ENCODE measurements at regions of chr2 and their contacts with region 1.

Region 1: DNA sequence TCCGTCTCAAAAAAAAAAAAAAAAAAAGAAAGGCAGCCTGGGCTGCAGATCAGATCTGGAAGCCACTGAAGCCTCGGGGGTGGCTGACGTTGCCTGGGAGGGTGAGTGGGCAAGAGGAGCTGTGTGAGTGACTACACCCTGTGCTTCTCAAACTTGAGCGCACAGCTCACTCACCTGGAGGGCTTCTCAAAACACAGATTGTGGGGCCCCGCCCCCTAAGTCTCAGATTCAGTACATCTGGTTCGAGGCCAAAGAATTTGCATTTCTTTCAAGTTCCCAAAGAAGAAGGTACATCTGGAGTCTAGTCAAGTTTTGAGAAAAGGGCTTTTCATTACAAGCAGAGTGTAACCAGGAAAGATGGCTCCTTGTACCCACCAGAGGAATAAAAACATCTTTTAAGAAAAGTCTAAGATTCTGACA is 97.7 kb upstream of the CAB39 start:
- DNase-seq: peak; percentile 26
- H3K4me3 Mint-ChIP-seq: peak overlapping the region; percentile 26
- H3K27ac Mint-ChIP-seq: peak overlapping the region; percentile 55
- H3K4me1 Mint-ChIP-seq: peaks cover 54% of the 10 kb centered on the region
- H3K27me3 Mint-ChIP-seq: no peaks in the 10 kb centered on the region

Region 2: GRCh38 chr2:230007931-230008707 is 606.8 kb before region 1 on chr2:
- intact Hi-C with region 1: loop called (anchors 1 kb)
- DNase-seq: peak; percentile 66
- H3K4me3 Mint-ChIP-seq: no peak overlapping the region
- H3K27ac Mint-ChIP-seq: no peak overlapping the region
- H3K4me1 Mint-ChIP-seq: peaks cover 11% of the 10 kb centered on the region
- H3K27me3 Mint-ChIP-seq: no peaks in the 10 kb centered on the region

Region 3: GRCh38 chr2:230225486-230225885 is 389.4 kb before region 1 on chr2 and contains the start of gene SP140:
- intact Hi-C with region 1: loop called (anchors 2 kb)
- DNase-seq: peak; percentile 80
- H3K4me3 Mint-ChIP-seq: peak within 1 kb of the TSS; percentile 91
- H3K27ac Mint-ChIP-seq: peak within 1 kb of the TSS; percentile 98
- H3K4me1 Mint-ChIP-seq: peaks cover 63% of the 10 kb centered on the region
- H3K27me3 Mint-ChIP-seq: no peaks in the 10 kb centered on the region
- total RNA-seq, gene SP140: 235 and 243 TPM in 2 replicates

Region 4: GRCh38 chr2:230411570-230412370 is 203.2 kb before region 1 on chr2:
- intact Hi-C with region 1: loop called (anchors 2 kb)
- DNase-seq: peak; percentile 76
- H3K4me3 Mint-ChIP-seq: peak overlapping the region; percentile 93
- H3K27ac Mint-ChIP-seq: peak overlapping the region; percentile 99
- H3K4me1 Mint-ChIP-seq: peaks cover 79% of the 10 kb centered on the region
- H3K27me3 Mint-ChIP-seq: no peaks in the 10 kb centered on the region

Region 5: DNA sequence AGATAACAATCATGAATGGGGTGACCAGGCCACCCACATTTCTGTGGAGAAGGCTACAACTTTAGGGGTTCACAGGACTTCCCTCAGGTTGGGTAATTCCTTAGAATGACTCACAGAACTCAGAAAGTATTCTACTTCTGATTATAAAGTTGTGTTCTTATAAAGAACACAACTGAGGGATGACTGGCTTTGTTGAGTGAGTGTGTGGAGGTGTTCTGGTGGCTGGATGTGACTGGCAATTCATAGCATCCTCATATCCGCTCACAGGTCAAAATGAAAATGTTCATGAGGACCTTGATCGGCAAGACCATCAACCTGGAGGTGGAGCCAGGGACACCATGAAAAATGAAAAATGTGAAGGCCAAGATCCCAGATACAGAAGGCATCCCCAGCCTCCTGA is 45.6 kb before region 1 on chr2:
- intact Hi-C with region 1: no loop called
- DNase-seq: no peak
- H3K4me3 Mint-ChIP-seq: no peak overlapping the region
- H3K27ac Mint-ChIP-seq: no peak overlapping the region
- H3K4me1 Mint-ChIP-seq: peaks cover 25% of the 10 kb centered on the region
- H3K27me3 Mint-ChIP-seq: no peaks in the 10 kb centered on the region

Region 6: DNA sequence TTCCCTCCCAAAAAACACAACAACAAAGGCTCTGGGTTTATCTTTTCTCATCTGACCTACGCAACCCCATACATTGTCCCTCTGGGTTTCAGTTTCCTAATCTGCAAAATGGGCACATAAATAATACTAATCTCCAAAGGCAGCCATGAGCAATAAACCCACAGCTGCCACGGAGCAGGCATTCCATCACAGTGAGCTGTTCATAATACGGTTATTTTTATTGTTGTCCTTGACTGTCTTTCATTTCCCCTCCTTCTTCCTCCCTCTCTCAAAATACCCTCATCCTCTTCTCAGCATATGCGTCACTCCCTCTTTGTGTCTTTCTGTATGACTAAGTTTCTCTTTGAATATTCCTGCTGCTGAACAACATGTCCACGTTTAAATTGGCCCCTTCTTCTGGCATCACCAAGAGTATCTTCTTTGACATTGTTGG is 32.1 kb before region 1 on chr2:
- intact Hi-C with region 1: loop called (anchors 1 kb)
- DNase-seq: no peak
- H3K4me3 Mint-ChIP-seq: peak overlapping the region; percentile 24
- H3K27ac Mint-ChIP-seq: peak overlapping the region; percentile 62
- H3K4me1 Mint-ChIP-seq: peaks cover 27% of the 10 kb centered on the region
- H3K27me3 Mint-ChIP-seq: no peaks in the 10 kb centered on the region

Region 7: GRCh38 chr2:230798769-230799399 is 184.0 kb after region 1 on chr2:
- intact Hi-C with region 1: loop called (anchors 1 kb)
- DNase-seq: peak; percentile 27
- H3K4me3 Mint-ChIP-seq: no peak overlapping the region
- H3K27ac Mint-ChIP-seq: no peak overlapping the region
- H3K4me1 Mint-ChIP-seq: peaks cover 26% of the 10 kb centered on the region
- H3K27me3 Mint-ChIP-seq: peaks cover under 1% of the 10 kb centered on the region

Region 8: DNA sequence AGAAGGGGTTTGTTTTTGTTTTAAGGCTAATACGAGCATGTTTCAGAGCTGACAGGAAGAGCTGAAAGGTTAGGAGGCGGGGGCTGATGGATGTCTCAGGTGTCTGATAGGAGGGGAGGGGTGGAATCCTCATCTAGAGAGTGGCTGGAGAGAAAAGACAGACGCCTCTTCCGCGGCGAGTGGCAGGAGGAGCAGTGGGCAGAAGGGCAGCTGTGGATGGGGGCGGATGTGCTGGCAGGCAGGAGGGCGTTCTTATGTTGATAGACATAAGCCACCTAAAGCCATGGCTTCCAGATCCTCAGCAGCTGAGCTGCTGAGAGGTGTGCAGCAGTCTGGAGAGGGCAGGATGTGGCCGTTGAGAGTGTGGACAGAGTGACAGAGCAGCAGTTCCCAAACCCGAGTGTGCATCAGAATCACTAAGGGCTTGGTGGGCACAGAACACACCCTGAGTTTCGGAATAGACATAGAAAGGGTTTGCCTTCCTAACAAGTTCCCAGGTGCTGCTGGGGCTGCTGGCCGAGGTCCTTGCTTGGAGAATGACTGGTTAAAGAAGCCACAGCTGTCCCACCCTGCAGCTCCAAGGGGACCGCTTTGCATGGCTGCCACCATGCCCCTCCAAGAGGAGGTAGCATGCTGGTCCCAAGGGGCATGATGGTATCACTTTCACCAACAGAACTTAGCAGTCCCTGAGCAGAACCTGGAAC is 246.8 kb after region 1 on chr2:
- intact Hi-C with region 1: no loop called
- DNase-seq: no peak
- H3K4me3 Mint-ChIP-seq: no peak overlapping the region
- H3K27ac Mint-ChIP-seq: no peak overlapping the region
- H3K4me1 Mint-ChIP-seq: peaks cover 18% of the 10 kb centered on the region
- H3K27me3 Mint-ChIP-seq: peaks cover 71% of the 10 kb centered on the region

Measured in activated T-helper 1 cell treated with anti-CD3 and anti-CD28 coated beads, Interleukin-12 subunit alpha, Interleukin-12 subunit beta, Interleukin-2, Interleukin-4 antibody, amounts not matched to agents 30 ng/mL and 10 ng/mL and 1 ng/mL, durations not matched to agents 14 hours and 24 hours and 36 hours (primary cell).